Vagina (tissue), 2 donors: ENCODE measurements at regions of chr1 and their contacts with region 1.

Region 1: DNA sequence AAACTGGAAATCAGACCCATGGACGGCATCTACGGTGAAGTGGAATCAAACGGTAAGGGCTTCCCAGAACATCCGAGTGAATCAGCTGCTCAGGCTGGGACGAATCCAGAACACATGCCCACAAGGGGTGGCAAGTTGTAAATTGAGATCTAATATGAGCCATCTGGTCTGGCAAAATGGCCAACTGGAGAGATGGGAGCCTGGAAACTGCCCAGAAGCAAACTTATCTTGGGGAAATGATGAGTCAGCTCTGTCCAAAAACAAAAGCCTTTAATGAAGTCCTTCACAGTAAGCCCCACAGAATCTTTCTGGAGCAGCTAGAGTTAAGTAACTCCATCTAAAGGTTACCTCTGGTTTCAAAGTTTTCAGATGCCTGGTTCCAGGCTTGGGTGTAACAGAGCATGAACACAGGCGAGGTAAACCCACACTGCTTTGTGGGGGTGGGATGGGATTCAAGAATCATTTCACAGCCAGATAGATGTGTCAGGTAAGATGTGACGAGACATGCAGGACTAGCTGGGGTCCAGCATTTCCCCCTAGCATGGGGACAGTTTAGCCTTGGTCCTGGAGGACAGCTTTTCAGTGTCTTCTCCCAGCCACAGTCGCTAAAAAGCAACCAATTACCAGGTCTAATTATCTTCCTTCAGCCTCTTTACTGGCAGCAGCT is 10.5 kb upstream of the SRP9 start:
- DNase-seq: no peak
- H3K4me3 ChIP-seq: no peak overlapping the region
- H3K27ac ChIP-seq: peak overlapping the region; percentile 68
- H3K4me1 ChIP-seq: peaks cover 68% of the 10 kb centered on the region
- H3K27me3 ChIP-seq: no peaks in the 10 kb centered on the region
- CTCF ChIP-seq: no peak
- POLR2A ChIP-seq: no peak

Region 2: GRCh38 chr1:225548140-225548857 is 218.8 kb before region 1 on chr1:
- intact Hi-C with region 1: loop called (anchors 5 kb)
- DNase-seq: no peak
- H3K4me3 ChIP-seq: no peak overlapping the region
- H3K27ac ChIP-seq: no peak overlapping the region
- H3K4me1 ChIP-seq: no peaks in the 10 kb centered on the region
- H3K27me3 ChIP-seq: no peaks in the 10 kb centered on the region
- CTCF ChIP-seq: no peak
- POLR2A ChIP-seq: no peak

Region 3: GRCh38 chr1:225652729-225653462 is 114.2 kb before region 1 on chr1 and contains the start of gene ENAH:
- intact Hi-C with region 1: loop called (anchors 5 kb)
- DNase-seq: no peak
- H3K4me3 ChIP-seq: peak within 1 kb of the TSS; percentile 79 to 95
- H3K27ac ChIP-seq: peak within 1 kb of the TSS; percentile 97
- H3K4me1 ChIP-seq: peaks cover 39% of the 10 kb centered on the region
- H3K27me3 ChIP-seq: no peaks in the 10 kb centered on the region
- CTCF ChIP-seq: no peak
- POLR2A ChIP-seq: peak in 1 of 2 donors; percentile 91
- total RNA-seq, gene ENAH: 62.4 TPM